ENCODE measurements at regions of chr3 and their contacts with region 1.

Region 1: DNA sequence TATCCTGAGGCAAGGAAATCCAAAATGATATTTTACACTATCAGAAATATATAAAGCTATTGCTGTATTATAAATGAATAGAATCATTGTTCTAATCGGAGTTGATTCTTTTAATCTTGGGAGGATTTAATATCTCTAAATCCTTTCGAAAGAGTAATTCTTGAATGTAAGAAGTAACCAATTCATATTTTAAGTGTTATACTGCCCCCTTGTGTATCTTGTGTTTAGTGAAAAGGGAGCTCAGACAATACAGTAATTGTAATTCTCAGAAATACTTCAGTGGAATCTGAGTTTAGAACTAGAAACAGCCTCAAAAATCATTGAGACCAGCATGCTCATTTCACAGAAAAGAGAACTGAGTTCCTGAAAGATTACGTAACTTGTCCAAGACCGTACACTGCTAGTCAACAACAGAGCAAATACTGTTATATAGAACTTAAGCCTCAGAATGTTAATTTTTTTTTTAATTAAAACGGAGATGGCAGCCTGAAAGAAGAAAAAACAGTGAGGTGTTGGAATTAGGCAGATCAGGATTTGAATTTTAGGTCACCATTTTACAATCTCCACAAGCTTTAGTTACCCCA is 42.9 kb downstream of the PLCH1 start:
- DNase-seq: no peak
- ATAC-seq: peak; percentile 50
- H3K4me3 ChIP-seq: no peak overlapping the region
- H3K4me1 ChIP-seq: no peaks in the 10 kb centered on the region
- CTCF ChIP-seq: peak; percentile 21

Region 2: DNA sequence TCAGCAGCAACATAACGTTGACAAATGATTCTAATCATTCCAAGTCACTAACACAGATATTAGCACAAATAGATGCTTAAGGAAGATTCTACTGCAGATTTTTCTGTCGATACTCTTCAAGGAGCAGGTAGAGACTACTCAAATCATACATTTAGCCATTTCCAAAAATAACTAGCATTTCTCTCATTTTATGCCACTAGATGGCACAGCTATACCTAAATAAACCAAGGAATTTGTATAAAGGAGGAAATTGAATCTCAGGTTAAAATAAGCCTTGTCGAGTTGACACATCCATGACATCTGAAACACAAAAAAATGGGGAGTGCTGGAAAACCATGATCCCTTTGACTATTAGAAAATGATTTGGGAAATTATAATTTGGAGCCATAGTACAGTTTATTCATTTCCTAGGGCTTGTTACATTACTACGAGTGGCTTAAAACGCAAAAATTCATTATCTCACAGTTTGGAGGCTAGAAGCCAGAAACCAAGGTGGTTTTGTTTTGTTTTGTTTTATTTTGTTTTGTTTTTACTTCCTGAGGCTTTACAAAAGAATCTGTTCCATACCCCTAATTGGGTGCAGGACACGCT is 349.0 kb before region 1 on chr3:
- intact Hi-C with region 1: loop called (anchors 5 to 10 kb)
- DNase-seq: no peak
- ATAC-seq: no peak
- H3K4me3 ChIP-seq: no peak overlapping the region
- H3K4me1 ChIP-seq: no peaks in the 10 kb centered on the region
- CTCF ChIP-seq: no peak

Region 3: DNA sequence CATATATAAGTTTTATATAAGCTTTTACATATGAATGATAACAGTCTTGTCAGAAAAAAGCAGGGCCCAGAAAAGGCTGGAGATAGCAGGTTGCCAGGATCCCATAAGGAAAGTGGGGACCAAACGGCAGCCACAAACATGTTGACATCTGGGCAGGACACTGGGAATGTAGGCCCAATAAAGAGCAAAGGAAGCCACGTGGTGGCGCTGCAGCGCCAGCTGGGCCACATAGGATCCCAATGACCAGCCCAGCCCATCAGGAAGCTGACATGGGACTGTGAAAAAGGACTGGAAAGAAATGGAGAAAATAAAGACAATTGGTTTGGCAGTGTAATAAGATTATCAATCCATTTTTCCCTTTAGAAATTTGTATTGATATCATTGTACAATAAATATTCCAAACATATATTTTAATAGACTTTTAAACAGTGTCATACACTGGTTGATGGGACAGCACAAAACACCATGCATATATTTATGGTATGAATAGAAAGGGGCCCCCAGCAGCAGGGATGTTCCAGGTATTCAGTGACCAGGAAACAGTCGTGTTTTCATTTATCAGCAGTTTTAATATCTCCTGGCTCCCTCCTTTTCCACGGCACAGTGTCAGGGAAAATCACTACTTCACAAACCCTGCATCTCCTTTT is 319.5 kb before region 1 on chr3:
- intact Hi-C with region 1: loop called in 1 of 2 experiments (anchors 5 kb)
- DNase-seq: peak; percentile 63 to 93 (median 88)
- ATAC-seq: peak; percentile 97
- H3K4me3 ChIP-seq: no peak overlapping the region
- H3K4me1 ChIP-seq: no peaks in the 10 kb centered on the region
- CTCF ChIP-seq: no peak

Region 4: DNA sequence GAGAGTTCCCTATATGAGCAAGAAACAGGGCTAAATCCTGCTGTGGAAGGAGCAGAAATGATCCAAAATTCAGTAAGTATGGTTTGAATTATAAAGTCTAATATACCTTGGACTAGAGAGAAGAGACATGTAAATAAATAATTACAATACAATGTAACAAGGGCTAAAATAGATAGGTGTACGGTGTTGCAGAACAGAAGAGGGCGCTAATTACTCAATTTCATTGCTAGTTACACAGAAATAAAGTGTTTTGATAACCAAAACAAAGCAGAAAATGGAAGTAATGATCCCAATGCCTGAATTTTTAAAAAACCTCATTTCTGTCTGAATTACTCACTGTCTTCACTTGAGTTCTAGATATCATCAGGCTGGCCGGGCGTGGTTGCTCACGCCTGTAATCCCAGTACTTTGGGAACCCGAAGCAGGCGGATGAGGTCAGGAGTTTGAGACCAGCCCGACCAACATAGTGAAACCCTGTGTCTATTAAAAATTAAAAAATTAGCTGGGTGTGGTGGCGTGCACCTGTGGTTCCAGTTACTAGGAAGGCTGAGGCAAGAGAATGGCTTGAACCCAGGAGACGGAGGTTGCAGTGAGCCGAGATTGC is 51.2 kb after region 1 on chr3:
- intact Hi-C with region 1: no loop called
- DNase-seq: peak in 1 of 3 donors; percentile 23
- ATAC-seq: peak; percentile 45
- H3K4me3 ChIP-seq: no peak overlapping the region
- H3K4me1 ChIP-seq: no peaks in the 10 kb centered on the region
- CTCF ChIP-seq: no peak

Measured in mucosa of descending colon (tissue), 3 donors.